OCI-LY7 (cell line): ENCODE measurements at regions of chr22 and their contacts with region 1.

Region 1: DNA sequence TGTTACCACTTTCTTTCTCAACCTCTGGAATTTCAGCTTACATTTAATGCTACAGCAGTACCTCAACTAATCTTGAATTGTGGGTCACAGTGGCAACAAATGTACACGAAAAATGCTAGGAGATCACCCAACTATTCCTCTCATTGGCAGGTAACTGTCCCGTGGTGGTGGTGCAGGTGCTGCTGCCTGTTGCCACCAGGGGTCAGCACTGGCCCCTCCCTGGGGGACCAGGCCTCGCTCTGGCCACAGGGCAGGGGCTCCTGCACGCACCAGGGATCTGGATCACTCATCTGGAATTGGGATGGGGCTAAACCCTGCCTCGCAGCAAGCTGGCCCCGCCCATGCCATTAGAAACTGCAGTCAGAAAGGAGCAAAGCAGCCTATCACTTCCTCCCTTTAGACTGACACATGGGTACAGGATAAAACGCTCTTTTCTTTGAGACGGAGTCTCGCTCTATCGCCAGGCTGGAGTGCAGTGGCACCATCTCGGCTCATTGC is 6.9 kb upstream of the POLDIP3 start:
- DNase-seq: peak; percentile 73
- H3K4me3 ChIP-seq: no peak overlapping the region
- H3K27ac ChIP-seq: no peak overlapping the region
- H3K4me1 ChIP-seq: peaks cover 27% of the 10 kb centered on the region
- CTCF ChIP-seq: peak; percentile 96

Region 2: DNA sequence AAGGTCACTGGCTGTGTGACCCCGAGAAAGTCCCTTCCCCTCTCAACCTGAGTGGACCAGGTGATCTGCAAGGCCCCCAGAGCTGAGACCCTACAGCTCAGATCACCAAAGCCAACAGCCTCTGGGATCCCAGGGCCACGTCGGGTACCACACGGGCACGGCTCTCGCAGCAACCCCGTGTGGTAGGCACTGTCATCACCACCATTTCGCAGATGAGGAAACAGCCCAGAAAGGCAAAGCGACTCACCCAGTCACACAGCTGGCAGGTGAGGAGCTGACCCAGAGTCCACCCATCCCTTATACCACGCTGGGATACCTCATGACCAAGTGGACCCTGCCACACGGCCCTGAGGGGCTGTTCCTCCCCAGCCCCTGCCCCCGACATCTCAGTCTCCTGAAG is 16.0 kb after region 1 on chr22:
- CTCF ChIA-PET with region 1: no interaction called
- POLR2A ChIA-PET with region 1: no interaction called
- intact Hi-C with region 1: no loop called
- DNase-seq: no peak
- H3K4me3 ChIP-seq: no peak overlapping the region
- H3K27ac ChIP-seq: no peak overlapping the region
- H3K4me1 ChIP-seq: no peaks in the 10 kb centered on the region
- CTCF ChIP-seq: no peak

Region 3: GRCh38 chr22:42649246-42650099 is 27.9 kb after region 1 on chr22 and contains the start of gene CYB5R3:
- CTCF ChIA-PET with region 1: no interaction called
- POLR2A ChIA-PET with region 1: no interaction called
- intact Hi-C with region 1: loop called (anchors 2 kb)
- DNase-seq: peak; percentile 76
- H3K4me3 ChIP-seq: peak within 1 kb of the TSS; percentile 100
- H3K27ac ChIP-seq: peak within 1 kb of the TSS; percentile 47
- H3K4me1 ChIP-seq: peaks cover 45% of the 10 kb centered on the region
- CTCF ChIP-seq: no peak
- total RNA-seq, gene CYB5R3: 28.5 and 38.0 TPM in 2 replicates

Region 4: DNA sequence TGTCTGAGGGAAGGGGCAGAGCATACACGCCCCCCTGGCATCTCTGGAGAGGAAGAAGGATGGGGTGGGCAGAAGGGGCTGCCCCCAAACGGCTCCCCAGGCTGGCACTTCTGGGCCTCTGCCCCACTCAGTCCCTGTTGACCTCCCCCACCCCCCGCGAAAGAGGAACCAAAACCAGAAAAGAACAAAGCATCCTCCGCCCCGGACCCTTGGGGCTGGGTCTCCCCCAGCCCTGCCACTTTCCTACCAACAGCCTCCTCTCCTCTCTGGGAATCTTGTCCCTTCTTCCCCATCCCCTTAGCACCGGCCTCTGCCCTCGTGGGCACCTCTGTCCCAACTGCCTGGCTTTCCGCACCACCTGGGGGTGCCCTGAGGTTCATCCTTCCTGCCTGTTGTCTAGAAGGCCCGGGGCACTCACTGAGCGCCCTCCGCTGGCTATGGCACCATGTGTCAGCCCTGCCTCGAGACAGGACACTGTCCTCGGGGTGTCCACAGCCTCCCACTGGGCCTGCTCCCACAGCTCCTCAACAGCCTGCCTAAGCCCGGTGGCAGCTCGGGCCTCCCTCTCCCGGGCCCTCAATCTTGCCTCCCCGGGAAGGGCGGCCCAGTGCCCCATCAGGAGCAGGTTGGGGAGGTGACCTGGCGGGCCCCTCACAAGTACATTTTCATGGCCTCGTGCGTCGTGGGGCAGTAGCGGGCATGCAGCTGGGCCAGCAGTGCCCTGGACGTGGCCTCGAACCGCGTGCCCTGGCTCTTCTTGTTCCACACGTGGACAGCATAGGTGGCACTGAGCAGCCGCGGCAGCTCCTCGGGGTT is 70.9 kb after region 1 on chr22:
- CTCF ChIA-PET with region 1: no interaction called
- POLR2A ChIA-PET with region 1: no interaction called
- intact Hi-C with region 1: loop called (anchors 1 kb)
- DNase-seq: peak; percentile 72
- H3K4me3 ChIP-seq: peak overlapping the region; percentile 49
- H3K27ac ChIP-seq: peak overlapping the region; percentile 62
- H3K4me1 ChIP-seq: peaks cover 57% of the 10 kb centered on the region
- CTCF ChIP-seq: peak; percentile 89

Region 5: DNA sequence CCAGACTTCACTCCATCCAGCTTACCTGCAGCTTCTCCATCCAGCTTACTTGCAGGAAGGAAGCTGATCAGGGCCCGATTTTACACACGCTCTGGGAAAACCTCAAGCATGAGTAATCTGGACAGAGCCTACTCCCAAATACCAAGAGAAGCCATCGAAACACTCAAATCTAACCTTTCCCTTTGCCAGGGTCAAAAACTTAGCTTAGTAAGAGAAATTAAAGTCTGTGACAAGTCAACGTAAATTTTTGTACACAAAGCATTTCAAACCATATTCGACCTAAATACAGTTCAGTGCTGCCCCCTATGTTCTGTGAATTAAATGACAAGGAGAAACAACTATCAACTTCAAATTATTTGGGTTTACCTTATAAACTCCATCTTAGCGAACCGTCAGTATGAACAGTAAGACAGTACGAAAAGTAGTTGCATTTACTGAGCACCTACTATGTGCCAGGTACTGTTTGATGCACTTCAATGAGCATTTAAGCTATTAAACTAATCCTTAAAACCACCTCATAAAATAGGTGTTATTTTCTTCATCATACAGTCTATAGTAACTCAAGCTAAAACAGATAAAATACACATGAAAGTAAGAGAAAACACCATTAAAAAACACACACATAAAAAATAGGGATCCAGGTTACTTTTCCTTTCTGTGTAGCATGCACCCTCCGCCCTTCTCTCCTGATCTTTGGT is 198.7 kb after region 1 on chr22:
- CTCF ChIA-PET with region 1: interaction called, 6 read pairs
- POLR2A ChIA-PET with region 1: interaction called, 4 read pairs
- intact Hi-C with region 1: loop called (anchors 1 kb)
- DNase-seq: peak; percentile 80
- H3K4me3 ChIP-seq: peak overlapping the region; percentile 24
- H3K27ac ChIP-seq: no peak overlapping the region
- H3K4me1 ChIP-seq: peaks cover 18% of the 10 kb centered on the region
- CTCF ChIP-seq: peak; percentile 98